ENCODE measurements at regions of chr3 and their contacts with region 1.

Region 1: GRCh38 chr3:100776746-100777145 is 67.5 kb downstream of the TFG start:
- DNase-seq: no peak
- H3K4me3 Mint-ChIP-seq: no peak overlapping the region
- H3K27ac Mint-ChIP-seq: no peak overlapping the region
- H3K4me1 Mint-ChIP-seq: peaks cover 6% of the 10 kb centered on the region
- H3K27me3 Mint-ChIP-seq: no peaks in the 10 kb centered on the region
- CTCF ChIP-seq: no peak

Region 2: GRCh38 chr3:100746092-100746491 is 30.7 kb before region 1 on chr3:
- CTCF ChIA-PET with region 1: no interaction called
- POLR2A ChIA-PET with region 1: no interaction called
- intact Hi-C with region 1: no loop called
- DNase-seq: no peak
- H3K4me3 Mint-ChIP-seq: no peak overlapping the region
- H3K27ac Mint-ChIP-seq: no peak overlapping the region
- H3K4me1 Mint-ChIP-seq: no peaks in the 10 kb centered on the region
- H3K27me3 Mint-ChIP-seq: no peaks in the 10 kb centered on the region
- CTCF ChIP-seq: no peak

Region 3: DNA sequence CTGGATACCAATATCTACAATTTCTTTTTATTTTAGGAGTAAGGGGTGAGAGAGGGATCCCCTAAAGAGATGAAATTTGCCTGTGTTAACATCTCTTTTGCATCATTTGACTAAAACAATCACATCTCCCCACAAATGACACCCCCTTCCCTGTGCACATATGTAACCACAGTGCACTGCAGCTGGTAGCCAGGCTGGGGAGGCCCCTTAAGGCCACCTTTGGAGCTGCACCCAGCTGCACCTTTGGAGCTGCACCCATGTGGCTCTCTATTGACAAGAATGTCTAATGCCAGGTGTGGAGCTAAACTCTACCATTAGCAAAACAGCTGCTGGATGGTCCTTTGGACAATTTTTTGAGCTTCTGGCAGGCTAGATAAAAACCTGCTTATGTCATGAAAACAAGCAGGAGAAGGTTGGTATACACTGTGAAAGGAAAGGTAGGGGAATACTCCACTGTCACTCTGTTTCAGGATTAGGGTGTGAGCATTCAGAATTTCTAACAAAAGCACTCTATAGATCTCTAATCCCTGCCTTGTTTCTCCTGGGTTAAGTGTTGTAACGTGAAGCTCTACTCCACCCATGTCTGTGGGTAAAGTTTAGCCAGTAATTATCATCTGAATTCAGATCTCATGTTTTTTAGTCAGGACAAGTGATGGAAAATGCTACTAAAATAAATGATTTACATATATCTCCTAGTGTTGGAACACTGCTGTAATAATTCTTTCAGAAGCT is 15.4 kb before region 1 on chr3:
- CTCF ChIA-PET with region 1: no interaction called
- POLR2A ChIA-PET with region 1: interaction called, 10 read pairs
- intact Hi-C with region 1: no loop called
- DNase-seq: peak; percentile 32
- H3K4me3 Mint-ChIP-seq: no peak overlapping the region
- H3K27ac Mint-ChIP-seq: no peak overlapping the region
- H3K4me1 Mint-ChIP-seq: peaks cover 13% of the 10 kb centered on the region
- H3K27me3 Mint-ChIP-seq: no peaks in the 10 kb centered on the region
- CTCF ChIP-seq: peak; percentile 16

Measured in MCF 10A (cell line).